Right lobe of liver (tissue), 6 donors: ENCODE measurements at regions of chr1 and their contacts with region 1.

Region 1: GRCh38 chr1:72540687-72541086 is 258.3 kb upstream of the NEGR1 start:
- DNase-seq: no peak
- ATAC-seq: peak; percentile 22 to 81 (median 52)
- H3K4me3 ChIP-seq: no peak overlapping the region
- H3K27ac ChIP-seq: no peak overlapping the region
- H3K4me1 ChIP-seq: no peaks in the 10 kb centered on the region
- H3K27me3 ChIP-seq: no peaks in the 10 kb centered on the region
- CTCF ChIP-seq: no peak
- POLR2A ChIP-seq: no peak

Region 2: DNA sequence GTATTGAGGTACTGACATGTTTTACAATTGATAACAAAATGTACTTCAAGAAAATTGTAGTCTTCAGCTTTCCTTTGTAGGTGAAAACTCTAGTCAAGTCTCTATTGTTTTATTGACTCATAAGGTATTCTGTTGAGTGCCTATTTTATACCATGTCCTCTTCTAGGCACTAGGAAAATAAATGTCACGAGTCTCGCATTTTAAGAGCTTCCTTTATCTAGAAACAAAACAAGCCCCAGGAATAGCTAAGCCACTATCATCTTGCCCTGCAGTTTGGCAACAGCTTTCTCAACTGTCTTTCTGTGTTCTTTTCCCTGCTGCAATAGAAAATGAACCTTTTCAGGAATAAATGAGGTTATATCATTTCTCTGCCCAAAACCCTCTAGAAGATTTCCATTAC is 30.1 kb after region 1 on chr1:
- intact Hi-C with region 1: loop called in 1 of 2 experiments (anchors 2 kb)
- DNase-seq: no peak
- ATAC-seq: no peak
- H3K4me3 ChIP-seq: no peak overlapping the region
- H3K27ac ChIP-seq: no peak overlapping the region
- H3K4me1 ChIP-seq: no peaks in the 10 kb centered on the region
- H3K27me3 ChIP-seq: no peaks in the 10 kb centered on the region
- CTCF ChIP-seq: no peak
- POLR2A ChIP-seq: no peak